Natural killer cell (primary cell): ENCODE measurements at regions of chr6 and their contacts with region 1.

Region 1: GRCh38 chr6:158026054-158026900 is 44.6 kb downstream of the SYNJ2 start:
- DNase-seq: peak; percentile 64 to 90
- ATAC-seq: peak; percentile 71 to 83 (median 78)
- H3K4me3 ChIP-seq: peak overlapping the region; percentile 26
- H3K4me3 Mint-ChIP-seq: peak overlapping the region; percentile 75
- H3K27ac ChIP-seq: peak overlapping the region; percentile 81
- H3K27ac Mint-ChIP-seq: peak overlapping the region; percentile 89 to 98
- H3K4me1 ChIP-seq: peaks cover 34% of the 10 kb centered on the region
- H3K4me1 Mint-ChIP-seq: peaks cover 29 to 35% of the 10 kb centered on the region in 2 donors
- H3K27me3 ChIP-seq: no peaks in the 10 kb centered on the region
- H3K27me3 Mint-ChIP-seq: no peaks in the 10 kb centered on the region
- CTCF ChIP-seq: peak; percentile 76

Region 2: GRCh38 chr6:157455731-157456523 is 570.4 kb before region 1 on chr6:
- intact Hi-C with region 1: no loop called
- DNase-seq: no peak
- ATAC-seq: peak in 1 of 3 donors; percentile 73
- H3K4me3 ChIP-seq: no peak overlapping the region
- H3K4me3 Mint-ChIP-seq: peak overlapping the region; percentile 21
- H3K27ac ChIP-seq: no peak overlapping the region
- H3K27ac Mint-ChIP-seq: peak overlapping the region; percentile 31 to 61
- H3K4me1 ChIP-seq: peaks cover 36% of the 10 kb centered on the region
- H3K4me1 Mint-ChIP-seq: peaks cover 22 to 27% of the 10 kb centered on the region in 2 donors
- H3K27me3 ChIP-seq: no peaks in the 10 kb centered on the region
- H3K27me3 Mint-ChIP-seq: peaks cover 0 to 3% of the 10 kb centered on the region in 2 donors
- CTCF ChIP-seq: no peak

Region 3: GRCh38 chr6:157981395-157982296 is 44.6 kb before region 1 on chr6 and contains the start of gene SYNJ2:
- intact Hi-C with region 1: loop called (anchors 1 kb)
- DNase-seq: peak; percentile 67 to 91
- ATAC-seq: peak; percentile 80 to 90 (median 83)
- H3K4me3 ChIP-seq: peak within 1 kb of the TSS; percentile 63
- H3K4me3 Mint-ChIP-seq: peak within 1 kb of the TSS; percentile 87
- H3K27ac ChIP-seq: no peak within 1 kb of the TSS
- H3K27ac Mint-ChIP-seq: peak within 1 kb of the TSS; percentile 65 to 77
- H3K4me1 ChIP-seq: peaks cover 40% of the 10 kb centered on the region
- H3K4me1 Mint-ChIP-seq: peaks cover 48 to 49% of the 10 kb centered on the region in 2 donors
- H3K27me3 ChIP-seq: no peaks in the 10 kb centered on the region
- H3K27me3 Mint-ChIP-seq: no peaks in the 10 kb centered on the region
- CTCF ChIP-seq: peak; percentile 52
- total RNA-seq, gene SYNJ2: 24.4 to 47.0 (median 28.0) TPM

Region 4: DNA sequence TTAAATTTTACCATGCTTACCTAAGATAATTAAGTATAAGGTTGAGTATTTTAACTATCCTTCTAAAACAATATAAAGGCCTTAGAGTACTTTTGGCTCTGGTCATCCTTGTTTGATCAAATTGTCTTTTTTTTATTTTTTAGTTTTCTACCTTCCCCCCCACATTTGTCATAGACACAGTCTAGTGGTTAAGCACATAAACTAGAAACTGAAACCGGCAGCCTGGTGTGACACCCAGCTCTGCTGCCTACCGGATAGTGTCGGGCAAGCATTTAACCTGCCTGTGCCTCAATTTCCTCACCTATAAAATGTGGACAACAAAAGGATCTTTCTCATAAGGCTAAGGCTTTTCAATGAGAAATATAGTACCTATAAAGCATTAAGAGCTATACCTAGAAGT is 264.4 kb after region 1 on chr6:
- intact Hi-C with region 1: no loop called
- DNase-seq: peak; percentile 48 to 79
- ATAC-seq: peak; percentile 96 to 99 (median 99)
- H3K4me3 ChIP-seq: peak overlapping the region; percentile 9
- H3K4me3 Mint-ChIP-seq: peak overlapping the region; percentile 97
- H3K27ac ChIP-seq: peak overlapping the region; percentile 83
- H3K27ac Mint-ChIP-seq: peak overlapping the region; percentile 93 to 99
- H3K4me1 ChIP-seq: peaks cover 17% of the 10 kb centered on the region
- H3K4me1 Mint-ChIP-seq: peaks cover 43 to 53% of the 10 kb centered on the region in 2 donors
- H3K27me3 ChIP-seq: no peaks in the 10 kb centered on the region
- H3K27me3 Mint-ChIP-seq: no peaks in the 10 kb centered on the region
- CTCF ChIP-seq: no peak